Endothelial cell of umbilical vein (primary cell): ENCODE measurements at regions of chr18 and their contacts with region 1.

Region 1: DNA sequence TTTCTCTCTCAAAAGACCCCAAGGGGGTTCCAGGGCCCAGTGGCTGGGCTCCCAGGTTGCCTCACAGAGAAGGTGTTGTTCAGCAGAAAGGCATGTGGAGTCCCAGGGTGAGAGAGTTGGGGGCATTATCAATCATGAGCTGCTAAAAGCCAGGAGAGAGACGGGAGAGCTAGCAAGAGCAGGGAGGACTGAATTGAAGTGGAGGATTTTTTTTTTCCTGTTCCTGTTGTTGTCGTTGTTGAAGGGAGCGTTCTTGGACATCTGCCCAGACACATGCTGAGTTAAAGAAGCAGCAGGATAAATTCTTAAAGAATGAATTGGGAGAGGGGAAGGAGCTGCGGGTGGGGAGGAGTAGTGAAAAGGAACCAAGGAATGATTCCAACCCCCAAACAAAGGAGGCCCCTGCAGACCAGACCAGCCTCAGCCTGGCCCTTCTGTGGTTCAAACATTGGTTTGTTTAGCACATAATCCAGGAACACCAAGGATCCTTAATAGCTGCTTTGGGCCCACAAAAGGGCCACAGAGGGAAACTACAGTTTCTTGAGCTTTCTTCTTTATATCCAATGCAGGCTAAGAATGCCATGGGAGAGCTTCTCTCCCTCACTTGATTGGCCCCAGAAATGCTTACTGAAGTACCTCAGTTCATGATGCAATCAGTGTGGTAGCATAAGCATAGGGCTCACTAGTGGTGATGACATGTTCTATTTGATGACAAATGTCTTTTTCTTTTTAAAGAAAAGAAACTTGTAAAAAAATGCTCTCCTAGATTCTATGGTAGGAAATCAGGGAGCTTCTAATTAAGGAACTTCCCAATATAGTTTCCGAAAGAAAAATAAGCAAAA is 146.0 kb downstream of the SETBP1 start:
- DNase-seq: peak; percentile 91
- H3K4me3 ChIP-seq: no peak overlapping the region
- H3K27ac ChIP-seq: no peak overlapping the region
- H3K4me1 ChIP-seq: no peaks in the 10 kb centered on the region
- H3K27me3 ChIP-seq: no peaks in the 10 kb centered on the region
- CTCF ChIP-seq: no peak
- POLR2A ChIP-seq: no peak

Region 2: DNA sequence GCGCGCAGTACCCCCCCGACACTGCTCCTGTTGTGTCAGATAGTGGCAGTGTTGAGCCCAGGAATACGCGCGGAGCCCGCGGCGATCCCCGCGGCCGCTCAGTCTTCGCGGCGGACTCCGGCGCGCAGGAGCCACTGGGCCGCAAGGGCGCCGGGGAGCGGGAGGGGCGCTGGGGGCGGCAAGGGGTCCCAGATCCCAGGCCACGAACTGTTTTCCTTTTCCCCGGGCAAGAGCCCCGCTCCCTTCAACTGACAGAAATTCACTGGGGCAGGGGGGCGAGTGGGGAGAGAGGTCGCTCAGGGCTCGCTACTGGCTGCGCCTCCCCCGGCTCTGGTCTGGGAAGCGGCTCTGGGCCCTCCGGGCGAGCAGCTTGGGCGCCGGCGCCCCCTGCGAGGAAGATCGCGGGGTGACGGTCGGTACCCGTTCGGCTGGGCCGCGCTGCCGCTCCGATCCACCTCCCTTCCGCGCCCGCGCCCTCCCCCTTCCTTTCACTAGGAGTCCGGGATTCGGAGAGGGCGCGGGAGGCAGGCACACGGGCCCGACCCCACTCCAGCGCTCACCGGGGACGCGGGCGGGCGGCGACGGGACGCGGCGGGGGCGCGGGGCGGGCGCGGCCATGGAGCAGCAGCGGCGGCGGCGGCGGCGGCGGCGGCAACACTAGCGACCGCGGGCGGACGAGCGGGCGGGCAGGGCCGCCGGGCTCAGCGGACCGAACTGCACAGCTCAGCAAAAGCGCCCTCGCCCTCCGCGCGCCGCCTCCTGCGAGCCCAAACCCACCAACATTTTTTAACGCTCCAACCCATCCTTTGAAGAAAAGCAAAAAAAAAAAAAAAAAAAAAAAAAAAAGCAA is 147.4 kb before region 1 on chr18:
- CTCF ChIA-PET with region 1: no interaction called
- POLR2A ChIA-PET with region 1: no interaction called
- dilution Hi-C with region 1: no loop called
- intact Hi-C with region 1: loop called (anchors 5 kb)
- DNase-seq: peak; percentile 87
- H3K4me3 ChIP-seq: peak overlapping the region; percentile 61 to 94 (median 81)
- H3K27ac ChIP-seq: no peak overlapping the region
- H3K4me1 ChIP-seq: no peaks in the 10 kb centered on the region
- H3K27me3 ChIP-seq: peaks cover 28 to 36% of the 10 kb centered on the region in 2 experiments
- CTCF ChIP-seq: peak; percentile 34 to 63
- POLR2A ChIP-seq: no peak

Region 3: GRCh38 chr18:44725300-44726096 is 101.1 kb before region 1 on chr18:
- CTCF ChIA-PET with region 1: no interaction called
- POLR2A ChIA-PET with region 1: no interaction called
- dilution Hi-C with region 1: no loop called
- intact Hi-C with region 1: loop called (anchors 10 kb)
- DNase-seq: peak; percentile 79
- H3K4me3 ChIP-seq: no peak overlapping the region
- H3K27ac ChIP-seq: no peak overlapping the region
- H3K4me1 ChIP-seq: peaks cover 9% of the 10 kb centered on the region
- H3K27me3 ChIP-seq: no peaks in the 10 kb centered on the region
- CTCF ChIP-seq: no peak
- POLR2A ChIP-seq: no peak

Region 4: GRCh38 chr18:44799907-44800421 is 26.7 kb before region 1 on chr18:
- CTCF ChIA-PET with region 1: no interaction called
- POLR2A ChIA-PET with region 1: no interaction called
- dilution Hi-C with region 1: no loop called
- intact Hi-C with region 1: no loop called
- DNase-seq: no peak
- H3K4me3 ChIP-seq: no peak overlapping the region
- H3K27ac ChIP-seq: no peak overlapping the region
- H3K4me1 ChIP-seq: no peaks in the 10 kb centered on the region
- H3K27me3 ChIP-seq: no peaks in the 10 kb centered on the region
- CTCF ChIP-seq: no peak
- POLR2A ChIP-seq: no peak

Region 5: GRCh38 chr18:44870631-44871502 is 44.2 kb after region 1 on chr18:
- CTCF ChIA-PET with region 1: no interaction called
- POLR2A ChIA-PET with region 1: no interaction called
- dilution Hi-C with region 1: no loop called
- intact Hi-C with region 1: no loop called
- DNase-seq: no peak
- H3K4me3 ChIP-seq: no peak overlapping the region
- H3K27ac ChIP-seq: no peak overlapping the region
- H3K4me1 ChIP-seq: no peaks in the 10 kb centered on the region
- H3K27me3 ChIP-seq: no peaks in the 10 kb centered on the region
- CTCF ChIP-seq: no peak
- POLR2A ChIP-seq: no peak